Activated T-helper 1 cell treated with anti-CD3 and anti-CD28 coated beads, Interleukin-12 subunit alpha, Interleukin-12 subunit beta, Interleukin-2, Interleukin-4 antibody, amounts not matched to agents 30 ng/mL and 10 ng/mL and 1 ng/mL, durations not matched to agents 14 hours and 24 hours and 36 hours (primary cell): ENCODE measurements at regions of chr7 and their contacts with region 1.

Region 1: GRCh38 chr7:102396027-102397019 is at the start of gene PRKRIP1:
- DNase-seq: peak; percentile 80
- H3K4me3 Mint-ChIP-seq: peak within 1 kb of the TSS; percentile 87
- H3K27ac Mint-ChIP-seq: peak within 1 kb of the TSS; percentile 70
- H3K4me1 Mint-ChIP-seq: peaks cover 15% of the 10 kb centered on the region
- H3K27me3 Mint-ChIP-seq: no peaks in the 10 kb centered on the region
- total RNA-seq, gene PRKRIP1: 25.7 and 28.3 TPM in 2 replicates

Region 2: DNA sequence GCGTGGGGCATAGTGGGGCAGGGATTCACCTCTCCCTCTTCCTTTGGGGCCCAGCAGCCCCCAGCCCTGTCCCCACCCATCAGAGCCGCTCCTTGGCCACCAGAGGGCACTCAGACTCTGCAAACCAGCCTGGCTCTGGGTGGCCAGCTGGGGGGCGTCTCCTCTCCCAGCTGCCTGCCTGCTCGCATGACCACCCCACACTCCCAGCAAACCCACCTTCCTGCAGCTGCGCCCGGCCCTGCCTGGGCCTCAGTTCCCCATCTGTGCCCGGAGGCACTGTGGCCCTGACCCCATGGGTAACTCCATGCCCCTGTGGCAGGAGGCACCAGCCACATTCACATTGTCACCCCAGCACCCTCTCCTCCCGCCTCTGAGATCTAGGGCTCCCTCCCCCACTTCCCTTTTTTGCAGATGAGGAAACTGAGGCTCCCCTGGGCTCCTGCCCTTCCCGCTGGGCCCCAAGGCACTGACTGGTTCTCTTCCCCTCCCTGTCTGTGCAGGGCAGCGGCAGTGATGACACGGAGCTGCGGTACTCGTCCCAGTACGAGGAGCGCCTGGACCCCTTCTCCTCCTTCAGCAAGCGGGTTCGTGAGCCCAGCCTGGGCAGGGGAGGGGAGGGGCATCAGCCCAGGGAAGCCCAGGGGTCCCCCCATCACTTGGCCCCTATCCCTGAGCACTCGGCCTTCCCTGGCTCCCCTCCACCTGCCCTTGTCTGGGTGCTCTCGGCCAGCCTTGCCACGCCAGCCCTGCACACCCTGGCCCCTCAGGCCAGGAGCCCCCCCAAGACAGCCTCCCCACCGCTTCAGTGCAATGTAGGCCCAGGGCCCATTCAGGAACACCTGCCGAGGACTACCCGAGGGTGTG is 116.6 kb before region 1 on chr7:
- intact Hi-C with region 1: no loop called
- DNase-seq: peak; percentile 41
- H3K4me3 Mint-ChIP-seq: no peak overlapping the region
- H3K27ac Mint-ChIP-seq: no peak overlapping the region
- H3K4me1 Mint-ChIP-seq: peaks cover 6% of the 10 kb centered on the region
- H3K27me3 Mint-ChIP-seq: peaks cover 8% of the 10 kb centered on the region

Region 3: GRCh38 chr7:102425639-102426267 is 29.4 kb after region 1 on chr7:
- intact Hi-C with region 1: loop called (anchors 1 kb)
- DNase-seq: peak; percentile 83
- H3K4me3 Mint-ChIP-seq: peak overlapping the region; percentile 86
- H3K27ac Mint-ChIP-seq: peak overlapping the region; percentile 100
- H3K4me1 Mint-ChIP-seq: peaks cover 68% of the 10 kb centered on the region
- H3K27me3 Mint-ChIP-seq: no peaks in the 10 kb centered on the region

Region 4: GRCh38 chr7:102988631-102989539 is 592.6 kb after region 1 on chr7:
- intact Hi-C with region 1: no loop called
- DNase-seq: no peak
- H3K4me3 Mint-ChIP-seq: no peak overlapping the region
- H3K27ac Mint-ChIP-seq: no peak overlapping the region
- H3K4me1 Mint-ChIP-seq: peaks cover 7% of the 10 kb centered on the region
- H3K27me3 Mint-ChIP-seq: no peaks in the 10 kb centered on the region